ENCODE measurements at regions of chr7 and their contacts with region 1.

Region 1: DNA sequence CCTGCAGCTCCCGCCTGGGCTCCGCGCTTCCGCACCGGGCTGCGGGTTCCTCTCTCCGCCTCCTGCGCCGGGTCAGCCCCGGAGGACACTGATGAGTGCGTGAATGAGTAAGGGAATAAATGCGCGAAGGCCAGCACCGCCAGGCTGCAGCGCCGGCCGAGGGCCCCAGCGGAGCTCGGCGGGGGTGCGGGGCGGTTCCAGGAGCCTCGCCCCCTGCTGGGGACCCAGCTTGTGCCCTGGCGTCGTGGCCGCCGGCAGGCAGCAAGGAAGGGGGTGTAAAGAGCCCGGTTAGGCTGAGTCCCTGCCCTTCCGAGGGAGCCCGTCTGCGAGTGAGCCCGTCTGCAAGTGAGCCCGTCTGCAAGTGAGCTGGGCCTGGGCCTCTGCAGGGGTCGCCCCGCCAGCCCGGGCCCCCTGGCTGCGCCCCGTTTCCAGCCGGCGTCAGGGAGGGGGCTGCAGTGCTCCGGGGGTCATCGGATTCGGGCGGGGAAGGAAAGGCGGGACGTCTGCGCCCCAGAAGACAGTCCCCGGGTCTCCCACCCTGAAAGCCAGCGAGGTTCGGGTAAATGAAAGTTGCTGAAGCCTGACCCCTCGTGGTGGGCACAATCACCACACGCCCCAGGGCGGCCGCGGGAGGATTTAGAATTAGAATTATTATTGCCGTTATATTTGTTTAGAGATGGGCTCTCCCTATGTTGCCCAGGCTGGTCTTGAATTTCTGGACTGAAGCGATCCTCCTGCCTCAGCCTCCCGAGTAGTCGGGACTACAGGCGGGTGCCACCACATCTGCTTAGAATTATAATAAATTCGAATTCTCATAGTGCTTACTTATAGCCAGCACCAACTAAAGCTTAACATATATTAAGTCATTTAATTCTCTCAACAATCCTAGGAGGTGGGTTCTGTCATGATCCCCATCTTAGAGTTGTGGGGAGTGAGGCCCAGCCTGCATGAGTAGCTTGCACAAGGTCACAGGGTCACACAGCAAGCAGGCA is 8.6 kb upstream of the CRYGN start:
- DNase-seq: peak; percentile 64 to 85 (median 79)
- H3K4me3 ChIP-seq: peak overlapping the region; percentile 62
- H3K4me3 Mint-ChIP-seq: peak overlapping the region; percentile 60 to 91 (median 83)
- H3K27ac ChIP-seq: no peak overlapping the region
- H3K27ac Mint-ChIP-seq: peak overlapping the region in 6 of 8 donors; percentile 34 to 88 (median 62)
- H3K4me1 ChIP-seq: peaks cover 7% of the 10 kb centered on the region
- H3K4me1 Mint-ChIP-seq: peaks cover 3 to 4% (median 4%) of the 10 kb centered on the region in 3 donors
- H3K27me3 ChIP-seq: no peaks in the 10 kb centered on the region
- H3K27me3 Mint-ChIP-seq: peaks cover 4 to 8% of the 10 kb centered on the region in 2 donors

Region 2: DNA sequence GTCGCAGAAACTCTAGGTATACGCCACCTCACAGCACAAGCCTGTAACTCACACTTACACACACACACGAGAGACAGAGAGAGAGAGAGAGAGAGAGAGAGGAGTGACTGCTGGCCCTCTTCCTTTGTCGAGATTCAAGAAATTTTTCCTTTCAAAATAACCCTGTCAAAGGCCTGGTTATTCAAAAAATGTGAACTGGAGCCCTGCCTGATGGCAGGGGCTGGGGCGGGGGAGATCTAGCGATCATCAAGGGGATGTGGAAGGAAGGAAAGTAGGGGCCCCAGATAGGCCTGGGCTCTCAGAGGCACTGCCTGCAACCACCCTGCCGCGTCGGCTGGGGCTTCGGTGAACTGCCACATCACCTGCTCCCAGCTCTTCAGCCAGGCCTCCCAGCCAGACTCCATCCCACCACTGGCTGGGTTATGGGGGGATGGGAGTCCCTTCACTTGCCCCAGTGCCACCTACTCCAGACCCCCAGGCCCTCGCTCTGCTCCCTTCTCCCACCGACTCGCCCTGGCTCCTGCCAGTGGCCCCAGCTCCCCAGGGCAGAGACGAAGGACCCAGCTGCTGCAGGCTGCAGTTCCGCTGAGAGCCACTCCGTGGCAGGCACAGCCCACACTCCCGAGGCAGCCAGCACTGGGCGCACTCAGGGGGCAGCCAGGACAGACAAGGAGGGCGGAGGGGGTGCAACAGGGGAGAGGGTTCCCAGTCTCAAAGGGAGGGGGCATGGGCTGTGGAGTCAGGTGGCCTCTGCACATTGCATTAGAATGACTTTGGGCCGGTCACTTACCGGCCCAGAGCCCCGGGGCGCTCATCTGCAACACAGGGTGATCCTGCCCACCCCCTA is 485.8 kb before region 1 on chr7:
- CTCF ChIA-PET with region 1: no interaction called
- POLR2A ChIA-PET with region 1: no interaction called
- DNase-seq: peak; percentile 35 to 69 (median 50)
- H3K4me3 ChIP-seq: no peak overlapping the region
- H3K4me3 Mint-ChIP-seq: peak overlapping the region in 1 of 7 donors; percentile 79
- H3K27ac ChIP-seq: peak overlapping the region; percentile 76
- H3K27ac Mint-ChIP-seq: no peak overlapping the region
- H3K4me1 ChIP-seq: peaks cover 9% of the 10 kb centered on the region
- H3K4me1 Mint-ChIP-seq: peaks cover 2 to 10% (median 4%) of the 10 kb centered on the region in 3 donors
- H3K27me3 ChIP-seq: peaks cover 7% of the 10 kb centered on the region
- H3K27me3 Mint-ChIP-seq: peaks cover 19 to 28% of the 10 kb centered on the region in 2 donors

Region 3: DNA sequence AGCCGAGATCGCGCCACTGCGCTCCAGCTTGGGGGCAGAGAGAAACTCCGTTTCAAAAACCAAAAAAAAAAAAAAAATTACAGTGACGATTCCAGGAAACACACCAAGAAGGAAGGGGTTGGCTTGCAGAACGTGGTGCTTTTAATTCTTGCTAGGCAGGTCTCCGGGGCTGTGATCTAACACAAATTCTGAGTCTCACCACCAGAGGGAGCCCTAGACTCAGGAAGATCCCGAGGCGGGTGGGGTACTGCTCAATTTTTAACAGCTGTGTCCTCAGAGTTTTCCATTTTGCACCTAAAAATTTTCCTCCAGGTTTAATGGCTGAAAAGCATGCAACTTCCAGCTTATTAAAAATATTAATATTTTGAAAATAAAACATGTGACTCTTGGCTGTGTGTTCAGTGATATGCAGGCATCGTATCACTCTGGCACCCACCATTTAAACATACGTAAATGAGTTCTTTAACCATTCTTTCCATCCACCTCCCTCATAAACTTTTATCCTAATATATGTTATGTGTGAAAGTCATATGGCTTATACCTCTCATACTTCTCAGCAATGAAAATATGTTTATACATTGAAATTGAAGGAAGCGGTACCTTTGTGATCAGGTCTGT is 133.4 kb before region 1 on chr7:
- CTCF ChIA-PET with region 1: interaction called, 83 read pairs
- POLR2A ChIA-PET with region 1: interaction called, 4 read pairs
- DNase-seq: peak; percentile 63 to 85 (median 78)
- H3K4me3 ChIP-seq: no peak overlapping the region
- H3K4me3 Mint-ChIP-seq: peak overlapping the region in 2 of 7 donors; percentile 44 to 64
- H3K27ac ChIP-seq: no peak overlapping the region
- H3K27ac Mint-ChIP-seq: peak overlapping the region in 2 of 8 donors; percentile 51 to 88
- H3K4me1 ChIP-seq: no peaks in the 10 kb centered on the region
- H3K4me1 Mint-ChIP-seq: peaks cover 3 to 5% (median 4%) of the 10 kb centered on the region in 3 donors
- H3K27me3 ChIP-seq: no peaks in the 10 kb centered on the region
- H3K27me3 Mint-ChIP-seq: peaks cover 0 to 4% of the 10 kb centered on the region in 2 donors

Region 4: GRCh38 chr7:151361193-151361959 is 87.2 kb before region 1 on chr7:
- CTCF ChIA-PET with region 1: interaction called, 138 read pairs
- POLR2A ChIA-PET with region 1: no interaction called
- DNase-seq: no peak
- H3K4me3 ChIP-seq: no peak overlapping the region
- H3K4me3 Mint-ChIP-seq: no peak overlapping the region
- H3K27ac ChIP-seq: no peak overlapping the region
- H3K27ac Mint-ChIP-seq: peak overlapping the region in 2 of 8 donors; percentile 46 to 57
- H3K4me1 ChIP-seq: no peaks in the 10 kb centered on the region
- H3K4me1 Mint-ChIP-seq: peaks cover 5 to 6% (median 5%) of the 10 kb centered on the region in 3 donors
- H3K27me3 ChIP-seq: no peaks in the 10 kb centered on the region
- H3K27me3 Mint-ChIP-seq: no peaks in the 10 kb centered on the region

Region 5: GRCh38 chr7:151408839-151409666 is 39.5 kb before region 1 on chr7:
- CTCF ChIA-PET with region 1: interaction called, 17 read pairs
- POLR2A ChIA-PET with region 1: interaction called, 11 read pairs
- DNase-seq: peak; percentile 73 to 93 (median 79)
- H3K4me3 ChIP-seq: peak overlapping the region; percentile 32
- H3K4me3 Mint-ChIP-seq: peak overlapping the region; percentile 77 to 93 (median 82)
- H3K27ac ChIP-seq: peak overlapping the region; percentile 92
- H3K27ac Mint-ChIP-seq: peak overlapping the region; percentile 86 to 99 (median 98)
- H3K4me1 ChIP-seq: peaks cover 6% of the 10 kb centered on the region
- H3K4me1 Mint-ChIP-seq: peaks cover 31 to 44% (median 37%) of the 10 kb centered on the region in 3 donors
- H3K27me3 ChIP-seq: peaks cover 6% of the 10 kb centered on the region
- H3K27me3 Mint-ChIP-seq: peaks cover 14 to 16% of the 10 kb centered on the region in 2 donors

Region 6: GRCh38 chr7:151432791-151433521 is 15.6 kb before region 1 on chr7:
- CTCF ChIA-PET with region 1: interaction called, 17 read pairs
- POLR2A ChIA-PET with region 1: interaction called, 3 read pairs
- DNase-seq: peak in 4 of 5 donors; percentile 31 to 69 (median 52)
- H3K4me3 ChIP-seq: no peak overlapping the region
- H3K4me3 Mint-ChIP-seq: peak overlapping the region in 6 of 7 donors; percentile 32 to 67 (median 41)
- H3K27ac ChIP-seq: no peak overlapping the region
- H3K27ac Mint-ChIP-seq: peak overlapping the region; percentile 67 to 96 (median 82)
- H3K4me1 ChIP-seq: peaks cover 60% of the 10 kb centered on the region
- H3K4me1 Mint-ChIP-seq: peaks cover 41 to 57% (median 43%) of the 10 kb centered on the region in 3 donors
- H3K27me3 ChIP-seq: no peaks in the 10 kb centered on the region
- H3K27me3 Mint-ChIP-seq: peaks cover 0 to 2% of the 10 kb centered on the region in 2 donors

Region 7: GRCh38 chr7:151631968-151632749 is 183.6 kb after region 1 on chr7:
- CTCF ChIA-PET with region 1: interaction called, 13 read pairs
- POLR2A ChIA-PET with region 1: no interaction called
- DNase-seq: peak; percentile 83 to 90 (median 88)
- H3K4me3 ChIP-seq: peak overlapping the region; percentile 84
- H3K4me3 Mint-ChIP-seq: peak overlapping the region; percentile 95 to 100 (median 98)
- H3K27ac ChIP-seq: peak overlapping the region; percentile 68
- H3K27ac Mint-ChIP-seq: peak overlapping the region; percentile 90 to 99 (median 96)
- H3K4me1 ChIP-seq: peaks cover 21% of the 10 kb centered on the region
- H3K4me1 Mint-ChIP-seq: peaks cover 21 to 41% (median 39%) of the 10 kb centered on the region in 3 donors
- H3K27me3 ChIP-seq: no peaks in the 10 kb centered on the region
- H3K27me3 Mint-ChIP-seq: no peaks in the 10 kb centered on the region

Measured in CD8-positive, alpha-beta memory T cell (primary cell).